ENCODE measurements at regions of chr3 and their contacts with region 1.

Region 1: GRCh38 chr3:58630076-58630709 is 36.4 kb downstream of the FAM3D start:
- DNase-seq: peak in 4 of 5 donors; percentile 61 to 70 (median 62)
- ATAC-seq: peak in 3 of 4 donors; percentile 19 to 49 (median 36)
- H3K4me3 ChIP-seq: no peak overlapping the region
- H3K27ac ChIP-seq: peak overlapping the region in 8 of 12 donors; percentile 65 to 92 (median 87)
- H3K4me1 ChIP-seq: peaks cover 11 to 42% (median 26%) of the 10 kb centered on the region in 12 donors
- H3K27me3 ChIP-seq: no peaks in the 10 kb centered on the region
- CTCF ChIP-seq: peak; percentile 89 to 99 (median 96)
- POLR2A ChIP-seq: no peak

Region 2: GRCh38 chr3:58305882-58306711 is 324.1 kb before region 1 on chr3 and contains the starts of genes HTD2 and RPP14:
- intact Hi-C with region 1: loop called in 1 of 10 experiments (anchors 10 kb)
- DNase-seq: peak; percentile 98 to 100 (median 99)
- ATAC-seq: peak; percentile 94 to 97 (median 96)
- H3K4me3 ChIP-seq: peak within 1 kb of the TSS; percentile 80 to 97 (median 86)
- H3K27ac ChIP-seq: peak within 1 kb of the TSS; percentile 90 to 99 (median 96)
- H3K4me1 ChIP-seq: peaks cover 5 to 36% (median 26%) of the 10 kb centered on the region in 12 donors
- H3K27me3 ChIP-seq: peaks cover 0 to 5% (median 0%) of the 10 kb centered on the region in 9 donors
- CTCF ChIP-seq: peak; percentile 95 to 99 (median 96)
- POLR2A ChIP-seq: peak in 1 of 2 donors; percentile 76
- total RNA-seq, gene HTD2: 5.7 to 21.6 (median 12.4) TPM
- total RNA-seq, gene RPP14: 9.6 to 32.4 (median 24.0) TPM

Region 3: GRCh38 chr3:58463181-58463941 is 166.8 kb before region 1 on chr3:
- intact Hi-C with region 1: loop called in 1 of 10 experiments (anchors 10 kb)
- DNase-seq: peak; percentile 49 to 83 (median 74)
- ATAC-seq: peak; percentile 82 to 96 (median 93)
- H3K4me3 ChIP-seq: peak overlapping the region in 8 of 12 donors; percentile 13 to 44 (median 32)
- H3K27ac ChIP-seq: no peak overlapping the region
- H3K4me1 ChIP-seq: peaks cover 0 to 16% (median 2%) of the 10 kb centered on the region in 12 donors
- H3K27me3 ChIP-seq: no peaks in the 10 kb centered on the region
- CTCF ChIP-seq: peak; percentile 59 to 92 (median 80)
- POLR2A ChIP-seq: no peak

Region 4: GRCh38 chr3:58568572-58569286 is 61.5 kb before region 1 on chr3:
- intact Hi-C with region 1: loop called (anchors 1 to 2 kb)
- DNase-seq: peak; percentile 61 to 82 (median 70)
- ATAC-seq: peak in 3 of 4 donors; percentile 42 to 54 (median 47)
- H3K4me3 ChIP-seq: no peak overlapping the region
- H3K27ac ChIP-seq: peak overlapping the region in 1 of 12 donors; percentile 39
- H3K4me1 ChIP-seq: peaks cover 0 to 33% (median 12%) of the 10 kb centered on the region in 12 donors
- H3K27me3 ChIP-seq: no peaks in the 10 kb centered on the region
- CTCF ChIP-seq: peak; percentile 90 to 97 (median 95)
- POLR2A ChIP-seq: no peak

Region 5: GRCh38 chr3:58585005-58585786 is 45.0 kb before region 1 on chr3:
- intact Hi-C with region 1: loop called in 7 of 10 experiments (anchors 5 kb)
- DNase-seq: peak; percentile 81 to 92 (median 89)
- ATAC-seq: peak; percentile 92 to 95 (median 94)
- H3K4me3 ChIP-seq: peak overlapping the region; percentile 24 to 68 (median 54)
- H3K27ac ChIP-seq: peak overlapping the region; percentile 69 to 89 (median 84)
- H3K4me1 ChIP-seq: peaks cover 0 to 37% (median 14%) of the 10 kb centered on the region in 12 donors
- H3K27me3 ChIP-seq: peaks cover 0 to 18% (median 5%) of the 10 kb centered on the region in 9 donors
- CTCF ChIP-seq: peak; percentile 57 to 92 (median 82)
- POLR2A ChIP-seq: peak in 1 of 2 donors; percentile 45

Measured in heart left ventricle (tissue), 16 donors.